Transverse colon (tissue), 4 donors: ENCODE measurements at regions of chr1 and their contacts with region 1.

Region 1: DNA sequence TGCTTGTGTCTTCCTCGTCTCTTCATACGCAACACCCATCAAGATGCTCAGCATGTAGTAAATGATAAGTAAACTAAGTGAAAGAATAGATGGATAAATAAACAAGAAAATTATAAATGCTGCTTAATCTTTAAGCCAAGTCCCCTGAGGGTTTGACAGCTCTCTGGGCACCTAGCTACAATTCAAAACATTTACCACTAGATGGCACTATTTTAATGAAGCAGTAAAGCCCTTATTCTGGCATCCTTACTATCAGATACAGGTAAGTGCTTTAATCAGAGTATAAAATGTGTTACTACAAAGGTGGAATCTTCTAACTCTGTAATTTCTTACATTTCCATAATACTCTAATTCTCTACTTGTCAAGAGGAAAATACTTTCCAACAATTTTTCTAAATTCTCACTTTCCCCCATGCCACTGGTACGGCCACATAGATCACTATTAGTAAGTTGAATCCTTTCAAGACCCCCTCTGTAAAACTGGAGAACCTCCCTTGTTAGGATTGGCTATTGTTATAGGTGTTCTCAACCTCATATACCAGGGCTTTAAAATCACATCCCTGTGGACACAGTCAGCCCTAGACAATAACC is 137.8 kb downstream of the BARHL2 start:
- DNase-seq: no peak
- H3K4me3 ChIP-seq: no peak overlapping the region
- H3K27ac ChIP-seq: no peak overlapping the region
- H3K4me1 ChIP-seq: peaks cover 0 to 5% (median 0%) of the 10 kb centered on the region in 4 donors
- H3K27me3 ChIP-seq: no peaks in the 10 kb centered on the region
- CTCF ChIP-seq: peak; percentile 41 to 65 (median 60)
- EP300 ChIP-seq: no peak
- POLR2A ChIP-seq: no peak

Region 2: GRCh38 chr1:88791192-88791591 is 1788.1 kb before region 1 on chr1:
- in situ Hi-C with region 1: no loop called
- intact Hi-C with region 1: no loop called
- DNase-seq: no peak
- H3K4me3 ChIP-seq: no peak overlapping the region
- H3K27ac ChIP-seq: no peak overlapping the region
- H3K4me1 ChIP-seq: no peaks in the 10 kb centered on the region
- H3K27me3 ChIP-seq: no peaks in the 10 kb centered on the region
- CTCF ChIP-seq: no peak
- EP300 ChIP-seq: no peak
- POLR2A ChIP-seq: no peak

Region 3: GRCh38 chr1:90220941-90221693 is 358.2 kb before region 1 on chr1:
- in situ Hi-C with region 1: no loop called
- intact Hi-C with region 1: no loop called
- DNase-seq: no peak
- H3K4me3 ChIP-seq: no peak overlapping the region
- H3K27ac ChIP-seq: peak overlapping the region; percentile 66 to 75 (median 70)
- H3K4me1 ChIP-seq: peaks cover 0 to 22% (median 10%) of the 10 kb centered on the region in 4 donors
- H3K27me3 ChIP-seq: no peaks in the 10 kb centered on the region
- CTCF ChIP-seq: no peak
- EP300 ChIP-seq: no peak
- POLR2A ChIP-seq: no peak

Region 4: GRCh38 chr1:90370686-90371447 is 208.4 kb before region 1 on chr1:
- in situ Hi-C with region 1: no loop called
- intact Hi-C with region 1: no loop called
- DNase-seq: no peak
- H3K4me3 ChIP-seq: no peak overlapping the region
- H3K27ac ChIP-seq: no peak overlapping the region
- H3K4me1 ChIP-seq: no peaks in the 10 kb centered on the region
- H3K27me3 ChIP-seq: no peaks in the 10 kb centered on the region
- CTCF ChIP-seq: no peak
- EP300 ChIP-seq: no peak
- POLR2A ChIP-seq: no peak

Region 5: GRCh38 chr1:90964444-90965035 is 385.2 kb after region 1 on chr1:
- in situ Hi-C with region 1: loop called in 2 of 4 experiments (anchors 25 kb)
- intact Hi-C with region 1: no loop called
- DNase-seq: no peak
- H3K4me3 ChIP-seq: no peak overlapping the region
- H3K27ac ChIP-seq: no peak overlapping the region
- H3K4me1 ChIP-seq: peaks cover 0 to 6% (median 2%) of the 10 kb centered on the region in 4 donors
- H3K27me3 ChIP-seq: no peaks in the 10 kb centered on the region
- CTCF ChIP-seq: peak in 4 of 5 experiments; percentile 26 to 38 (median 34)
- EP300 ChIP-seq: no peak
- POLR2A ChIP-seq: no peak

Region 6: GRCh38 chr1:91124989-91125417 is 545.7 kb after region 1 on chr1:
- in situ Hi-C with region 1: loop called in 1 of 4 experiments (anchors 25 kb)
- intact Hi-C with region 1: no loop called
- DNase-seq: no peak
- H3K4me3 ChIP-seq: no peak overlapping the region
- H3K27ac ChIP-seq: no peak overlapping the region
- H3K4me1 ChIP-seq: peaks cover 0 to 19% (median 7%) of the 10 kb centered on the region in 4 donors
- H3K27me3 ChIP-seq: no peaks in the 10 kb centered on the region
- CTCF ChIP-seq: no peak
- EP300 ChIP-seq: no peak
- POLR2A ChIP-seq: no peak

Region 7: DNA sequence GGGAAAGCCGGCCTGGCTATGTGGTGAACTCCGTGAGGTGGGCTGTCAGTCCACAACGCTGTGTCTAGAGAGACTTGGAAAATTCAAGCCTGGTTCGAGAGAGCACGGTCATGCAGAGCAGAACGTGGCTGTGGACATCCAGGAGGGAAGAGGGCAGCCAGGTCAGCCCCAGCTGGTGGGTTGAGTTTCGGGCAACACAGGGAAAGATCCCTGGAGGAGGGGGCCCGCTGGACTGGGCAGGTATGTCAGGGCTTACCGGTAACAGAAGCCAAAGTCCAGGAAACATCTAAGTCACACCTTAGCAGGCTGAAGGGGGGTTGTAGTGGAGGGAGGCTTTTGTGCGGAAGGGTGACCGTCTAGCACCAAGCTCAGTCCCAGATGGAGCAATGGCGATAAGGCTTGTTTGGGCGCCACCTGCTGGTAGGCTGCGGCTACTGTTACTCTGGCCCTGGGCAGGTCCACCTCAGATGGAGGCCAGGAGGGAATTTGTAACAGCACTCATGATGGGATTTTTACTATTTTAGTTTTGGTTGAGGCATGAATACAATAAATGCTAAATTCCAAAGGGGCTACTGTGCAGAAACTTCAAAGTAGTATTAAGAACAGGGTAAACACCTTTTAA is 585.8 kb after region 1 on chr1:
- in situ Hi-C with region 1: loop called in 2 of 4 experiments (anchors 25 kb)
- intact Hi-C with region 1: loop called (anchors 5 kb)
- DNase-seq: peak; percentile 86
- H3K4me3 ChIP-seq: no peak overlapping the region
- H3K27ac ChIP-seq: no peak overlapping the region
- H3K4me1 ChIP-seq: no peaks in the 10 kb centered on the region
- H3K27me3 ChIP-seq: no peaks in the 10 kb centered on the region
- CTCF ChIP-seq: peak; percentile 82 to 96 (median 92)
- EP300 ChIP-seq: no peak
- POLR2A ChIP-seq: no peak